AG04450 (cell line): ENCODE measurements at regions of chr7 and their contacts with region 1.

Region 1: DNA sequence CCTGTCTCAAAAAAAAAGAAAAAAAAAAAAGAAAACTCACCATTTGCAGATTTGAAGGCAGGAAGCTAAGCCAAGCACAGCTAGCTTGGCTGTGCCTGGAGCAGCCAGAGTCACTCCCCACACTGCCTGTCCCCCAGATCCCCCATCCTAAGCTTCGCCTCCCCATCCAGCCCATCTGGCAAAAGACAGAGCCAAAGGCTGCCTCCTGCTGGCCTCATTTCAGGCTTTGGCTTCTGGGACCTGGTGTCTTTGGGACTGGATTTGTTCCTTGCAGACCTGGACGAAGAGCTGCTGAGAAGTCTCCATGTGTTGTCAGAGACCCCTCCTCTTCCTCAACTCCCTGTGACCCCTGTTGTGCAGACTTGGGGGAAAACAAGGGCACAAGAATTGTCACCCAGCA is 8.1 kb downstream of the ASL start:
- DNase-seq: no peak
- H3K4me3 ChIP-seq: no peak overlapping the region
- H3K27ac ChIP-seq: no peak overlapping the region
- H3K27me3 ChIP-seq: no peaks in the 10 kb centered on the region
- CTCF ChIP-seq: no peak

Region 2: DNA sequence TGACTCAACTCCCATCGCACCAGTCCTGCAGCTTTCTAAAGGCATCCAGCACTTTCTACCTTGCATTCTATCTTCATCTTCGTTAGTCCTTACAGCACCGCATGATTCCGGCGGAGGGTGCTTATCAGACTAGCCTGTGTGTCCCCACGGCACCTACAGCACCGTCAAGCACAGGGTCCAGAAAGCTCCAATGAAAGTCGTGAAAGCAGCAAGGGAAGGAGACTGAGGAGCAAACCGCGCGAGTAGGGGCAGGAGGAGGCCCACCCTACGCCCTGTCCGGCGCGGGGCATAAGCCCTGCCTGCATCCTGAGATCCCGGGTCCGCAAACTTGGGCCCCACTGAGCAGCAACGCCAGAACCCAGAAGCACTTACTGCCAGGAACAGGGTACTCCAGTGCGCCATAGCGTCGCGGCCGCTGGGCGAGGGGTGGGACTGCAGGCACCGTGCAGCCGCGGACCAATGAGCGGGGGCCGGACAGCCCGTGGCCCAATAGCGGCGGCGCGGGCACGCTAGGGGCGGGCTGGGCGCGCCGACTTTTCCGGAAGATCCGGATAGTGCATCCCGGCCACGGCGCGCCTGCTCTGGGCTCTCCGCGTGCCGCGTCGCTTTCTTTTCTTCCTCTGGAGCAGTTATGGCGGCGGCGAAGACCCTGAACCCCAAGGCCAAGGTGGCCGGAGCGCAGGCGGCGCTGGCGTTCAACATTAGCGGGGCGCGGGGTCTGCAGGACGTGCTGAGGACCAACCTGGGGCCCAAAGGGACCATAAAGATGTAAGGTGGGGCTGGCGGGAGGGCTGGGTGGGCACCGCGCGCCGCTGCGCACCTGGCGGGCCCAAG is 332.9 kb before region 1 on chr7:
- CTCF ChIA-PET with region 1: no interaction called
- POLR2A ChIA-PET with region 1: interaction called, 12 read pairs
- DNase-seq: peak; percentile 69
- H3K4me3 ChIP-seq: peak overlapping the region; percentile 99
- H3K27ac ChIP-seq: peak overlapping the region; percentile 90
- H3K27me3 ChIP-seq: no peaks in the 10 kb centered on the region
- CTCF ChIP-seq: no peak

Region 3: DNA sequence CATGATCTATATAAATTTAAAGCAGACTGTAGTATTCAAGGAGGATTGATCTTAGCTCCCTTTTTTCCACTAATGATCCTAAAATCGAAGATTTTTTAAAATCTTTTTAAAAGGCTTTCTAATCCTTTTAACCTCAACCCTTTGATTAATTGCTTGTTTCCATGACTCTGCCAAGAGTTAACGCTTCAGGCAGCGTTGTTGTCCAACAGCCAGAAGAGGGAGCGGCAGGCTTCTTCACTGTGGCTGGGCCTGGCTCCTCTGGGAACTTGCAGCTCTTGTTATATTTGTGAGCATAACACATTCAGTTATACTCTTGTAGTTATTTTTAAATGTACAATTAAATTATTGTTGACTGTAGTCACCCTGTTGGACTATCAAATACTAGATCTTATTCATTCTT is 57.2 kb after region 1 on chr7:
- CTCF ChIA-PET with region 1: no interaction called
- POLR2A ChIA-PET with region 1: no interaction called
- DNase-seq: no peak
- H3K4me3 ChIP-seq: no peak overlapping the region
- H3K27ac ChIP-seq: no peak overlapping the region
- H3K27me3 ChIP-seq: no peaks in the 10 kb centered on the region
- CTCF ChIP-seq: peak; percentile 77